ENCODE measurements at regions of chr1 and their contacts with region 1.

Region 1: DNA sequence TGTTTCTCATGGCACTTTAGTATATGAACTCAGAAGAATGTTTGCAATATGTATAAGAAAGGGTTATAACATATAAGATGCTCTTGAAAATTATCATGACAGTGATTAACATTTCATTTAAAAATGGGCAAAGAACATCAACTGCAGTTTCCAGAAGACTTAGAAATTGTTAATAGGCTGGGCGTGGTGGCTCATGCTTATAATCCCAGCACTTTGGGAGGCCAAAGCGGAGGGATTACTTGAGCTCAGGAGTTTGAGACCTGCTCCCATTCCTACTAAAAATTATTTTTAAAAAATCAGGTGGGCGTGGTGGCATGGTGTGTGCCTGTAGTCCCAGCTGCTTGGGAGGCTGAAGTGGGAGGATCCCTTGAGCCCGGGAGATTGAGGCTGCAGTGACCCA is 23.1 kb downstream of the MTF2 start:
- DNase-seq: no peak
- ATAC-seq: no peak
- H3K4me3 ChIP-seq: no peak overlapping the region
- H3K27ac ChIP-seq: no peak overlapping the region
- H3K4me1 ChIP-seq: no peaks in the 10 kb centered on the region
- CTCF ChIP-seq: no peak
- EP300 ChIP-seq: no peak
- POLR2A ChIP-seq: no peak
- RAD21 ChIP-seq: no peak

Region 2: DNA sequence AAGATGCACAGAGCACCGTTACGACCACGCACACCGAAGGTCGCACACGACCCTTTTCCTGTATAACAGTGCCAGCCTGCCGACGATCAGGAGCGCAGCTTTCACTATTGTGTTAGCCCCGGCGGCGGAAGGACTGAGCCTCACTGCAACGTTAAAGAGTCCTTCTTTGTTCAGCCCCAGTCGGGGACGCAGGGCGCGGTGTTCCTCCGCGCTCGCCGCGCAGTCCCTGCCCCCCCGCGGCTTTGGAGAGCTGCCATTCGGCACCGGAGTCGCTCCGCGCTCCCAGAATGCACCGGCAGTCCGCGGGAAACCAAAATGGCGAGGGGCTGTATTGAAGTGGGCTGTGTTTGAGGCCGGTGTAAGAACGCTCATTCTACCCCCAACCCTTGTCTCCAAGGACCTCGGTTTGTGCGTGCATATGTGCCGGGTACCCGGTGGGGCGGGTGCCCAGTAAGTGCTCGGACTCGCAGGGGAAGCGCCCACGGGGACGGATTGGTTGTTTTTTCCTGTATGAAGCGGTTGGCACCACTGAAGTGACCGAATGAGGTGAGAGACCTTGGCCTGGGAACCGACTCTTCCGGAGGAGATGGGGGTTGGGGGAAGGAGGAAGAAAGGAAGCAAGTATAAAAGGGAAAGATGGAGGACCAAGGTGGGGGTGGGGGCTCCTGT is 23.0 kb before region 1 on chr1 and contains the start of gene MTF2:
- CTCF ChIA-PET with region 1: no interaction called
- POLR2A ChIA-PET with region 1: interaction called, 11 read pairs
- DNase-seq: peak; percentile 73 to 96
- ATAC-seq: peak; percentile 92
- H3K4me3 ChIP-seq: peak within 1 kb of the TSS; percentile 86
- H3K27ac ChIP-seq: peak within 1 kb of the TSS; percentile 88 to 96
- H3K4me1 ChIP-seq: peaks cover 19% of the 10 kb centered on the region; the same call in 2 of the 3 replicates
- CTCF ChIP-seq: no peak
- EP300 ChIP-seq: peak in 1 of 2 experiments; percentile 30; a peak in 1 of 5 replicates
- POLR2A ChIP-seq: peak; percentile 93
- RAD21 ChIP-seq: no peak; a peak in 1 of 5 replicates
- polyA plus RNA-seq, gene MTF2: 29.5 and 31.2 TPM in 2 replicates

Measured in A549 (cell line).